ENCODE measurements at regions of chr22 and their contacts with region 1.

Region 1: GRCh38 chr22:44080936-44081861 is 57.1 kb downstream of the PARVB start:
- DNase-seq: peak; percentile 87
- ATAC-seq: peak; percentile 77
- H3K4me3 Mint-ChIP-seq: no peak overlapping the region
- H3K27ac Mint-ChIP-seq: no peak overlapping the region
- H3K4me1 Mint-ChIP-seq: peaks cover 19% of the 10 kb centered on the region
- H3K27me3 Mint-ChIP-seq: no peaks in the 10 kb centered on the region
- CTCF ChIP-seq: peak; percentile 85

Region 2: GRCh38 chr22:44068422-44069191 is 12.6 kb before region 1 on chr22:
- CTCF ChIA-PET with region 1: interaction called, 18 read pairs
- POLR2A ChIA-PET with region 1: no interaction called
- DNase-seq: no peak
- ATAC-seq: no peak
- H3K4me3 Mint-ChIP-seq: no peak overlapping the region
- H3K27ac Mint-ChIP-seq: peak overlapping the region; percentile 80; the same call in 1 of the 2 replicates
- H3K4me1 Mint-ChIP-seq: peaks cover 11% of the 10 kb centered on the region
- H3K27me3 Mint-ChIP-seq: no peaks in the 10 kb centered on the region
- CTCF ChIP-seq: no peak

Region 3: GRCh38 chr22:44098083-44098739 is 17.0 kb after region 1 on chr22:
- CTCF ChIA-PET with region 1: interaction called, 18 read pairs
- POLR2A ChIA-PET with region 1: no interaction called
- DNase-seq: no peak
- ATAC-seq: no peak
- H3K4me3 Mint-ChIP-seq: no peak overlapping the region
- H3K27ac Mint-ChIP-seq: no peak overlapping the region
- H3K4me1 Mint-ChIP-seq: peaks cover 4% of the 10 kb centered on the region
- H3K27me3 Mint-ChIP-seq: no peaks in the 10 kb centered on the region
- CTCF ChIP-seq: no peak

Region 4: DNA sequence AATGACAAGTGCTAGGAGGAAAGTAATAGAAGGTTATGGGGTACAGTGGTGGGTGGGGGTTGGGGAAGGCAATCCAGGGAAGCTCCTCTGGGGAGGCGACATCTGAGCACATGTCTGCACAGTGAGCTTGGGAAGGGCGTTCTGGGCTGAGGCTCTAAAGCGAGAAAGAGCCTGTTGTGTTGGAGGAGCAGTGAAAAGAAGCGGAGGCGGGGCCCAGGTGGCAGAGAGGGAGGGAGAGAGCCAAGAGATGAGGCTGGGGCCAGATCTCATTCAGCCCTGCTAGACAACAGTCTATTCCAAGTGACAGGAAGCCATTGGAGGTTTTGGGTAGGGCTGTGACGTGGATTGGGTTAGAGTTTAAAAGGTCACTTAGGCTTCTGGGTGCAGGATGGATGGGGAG is 44.2 kb after region 1 on chr22:
- CTCF ChIA-PET with region 1: no interaction called
- POLR2A ChIA-PET with region 1: no interaction called
- DNase-seq: no peak
- ATAC-seq: no peak
- H3K4me3 Mint-ChIP-seq: no peak overlapping the region
- H3K27ac Mint-ChIP-seq: no peak overlapping the region
- H3K4me1 Mint-ChIP-seq: peaks cover 9% of the 10 kb centered on the region
- H3K27me3 Mint-ChIP-seq: peaks cover 7% of the 10 kb centered on the region; the same call in 1 of the 2 replicates
- CTCF ChIP-seq: no peak

Region 5: GRCh38 chr22:44147821-44148574 is 66.8 kb after region 1 on chr22:
- CTCF ChIA-PET with region 1: interaction called, 25 read pairs
- POLR2A ChIA-PET with region 1: interaction called, 3 read pairs
- DNase-seq: peak; percentile 84
- ATAC-seq: peak; percentile 72
- H3K4me3 Mint-ChIP-seq: peak overlapping the region; percentile 51
- H3K27ac Mint-ChIP-seq: peak overlapping the region; percentile 99
- H3K4me1 Mint-ChIP-seq: peaks cover 59% of the 10 kb centered on the region
- H3K27me3 Mint-ChIP-seq: no peaks in the 10 kb centered on the region; the same call in none of the 2 replicates
- CTCF ChIP-seq: no peak

Region 6: GRCh38 chr22:44329179-44329796 is 248.1 kb after region 1 on chr22:
- CTCF ChIA-PET with region 1: interaction called, 10 read pairs
- POLR2A ChIA-PET with region 1: no interaction called
- DNase-seq: no peak
- ATAC-seq: no peak
- H3K4me3 Mint-ChIP-seq: 0 out of 2 replicates have a peak overlapping the region, but pooled peaks have one; percentile 29
- H3K27ac Mint-ChIP-seq: no peak overlapping the region
- H3K4me1 Mint-ChIP-seq: peaks cover 38% of the 10 kb centered on the region
- H3K27me3 Mint-ChIP-seq: peaks cover 31% of the 10 kb centered on the region
- CTCF ChIP-seq: no peak

Region 7: GRCh38 chr22:44444341-44445301 is 363.4 kb after region 1 on chr22:
- CTCF ChIA-PET with region 1: interaction called, 11 read pairs
- POLR2A ChIA-PET with region 1: no interaction called
- DNase-seq: peak; percentile 68
- ATAC-seq: peak; percentile 80
- H3K4me3 Mint-ChIP-seq: no peak overlapping the region
- H3K27ac Mint-ChIP-seq: no peak overlapping the region
- H3K4me1 Mint-ChIP-seq: 0 out of 2 replicates have a peak, but pooled peaks cover 3% of the 10 kb centered on the region
- H3K27me3 Mint-ChIP-seq: no peaks in the 10 kb centered on the region
- CTCF ChIP-seq: 0 out of 2 replicates have a peak, but pooled peaks have one; percentile 39

Region 8: DNA sequence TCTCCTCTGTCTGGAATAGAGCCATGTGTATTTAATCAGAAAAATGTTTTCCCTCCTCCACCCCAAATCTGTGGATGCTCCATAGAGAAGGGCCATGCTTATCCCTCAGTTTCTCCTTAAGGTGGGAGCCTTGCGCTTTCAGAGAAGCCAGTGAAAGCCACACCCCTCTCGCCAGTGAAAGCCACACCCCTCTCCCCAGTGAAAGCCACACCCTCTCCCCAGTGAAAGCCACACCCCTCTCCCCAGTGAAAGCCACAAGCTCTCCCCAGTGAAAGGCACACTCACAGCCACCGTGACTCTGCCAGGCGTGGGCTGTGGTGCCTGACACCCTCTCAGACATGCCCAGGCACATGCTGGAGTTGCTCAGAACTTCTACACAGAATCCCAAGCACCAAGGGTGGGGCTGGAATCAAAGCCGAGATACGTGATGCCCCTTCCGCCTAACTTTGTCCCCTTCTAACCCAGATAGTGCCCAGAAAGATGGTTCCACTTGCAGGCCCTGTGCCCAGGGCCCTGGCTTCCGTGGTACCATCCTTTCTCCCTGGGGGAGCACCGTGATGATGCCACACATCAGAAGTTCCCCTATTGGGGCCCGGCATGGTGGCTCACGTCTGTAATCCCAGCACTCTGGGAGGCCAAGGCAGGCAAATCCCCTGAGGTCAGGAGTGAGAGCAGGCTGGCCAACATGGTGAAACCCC is 604.3 kb after region 1 on chr22:
- CTCF ChIA-PET with region 1: no interaction called
- POLR2A ChIA-PET with region 1: no interaction called
- DNase-seq: peak; percentile 64
- ATAC-seq: peak; percentile 76
- H3K4me3 Mint-ChIP-seq: no peak overlapping the region
- H3K27ac Mint-ChIP-seq: peak overlapping the region; percentile 74; the same call in 1 of the 2 replicates
- H3K4me1 Mint-ChIP-seq: peaks cover 10% of the 10 kb centered on the region
- H3K27me3 Mint-ChIP-seq: peaks cover 2% of the 10 kb centered on the region; the same call in 1 of the 2 replicates
- CTCF ChIP-seq: no peak